ENCODE measurements at regions of chr22 and their contacts with region 1.

Region 1: DNA sequence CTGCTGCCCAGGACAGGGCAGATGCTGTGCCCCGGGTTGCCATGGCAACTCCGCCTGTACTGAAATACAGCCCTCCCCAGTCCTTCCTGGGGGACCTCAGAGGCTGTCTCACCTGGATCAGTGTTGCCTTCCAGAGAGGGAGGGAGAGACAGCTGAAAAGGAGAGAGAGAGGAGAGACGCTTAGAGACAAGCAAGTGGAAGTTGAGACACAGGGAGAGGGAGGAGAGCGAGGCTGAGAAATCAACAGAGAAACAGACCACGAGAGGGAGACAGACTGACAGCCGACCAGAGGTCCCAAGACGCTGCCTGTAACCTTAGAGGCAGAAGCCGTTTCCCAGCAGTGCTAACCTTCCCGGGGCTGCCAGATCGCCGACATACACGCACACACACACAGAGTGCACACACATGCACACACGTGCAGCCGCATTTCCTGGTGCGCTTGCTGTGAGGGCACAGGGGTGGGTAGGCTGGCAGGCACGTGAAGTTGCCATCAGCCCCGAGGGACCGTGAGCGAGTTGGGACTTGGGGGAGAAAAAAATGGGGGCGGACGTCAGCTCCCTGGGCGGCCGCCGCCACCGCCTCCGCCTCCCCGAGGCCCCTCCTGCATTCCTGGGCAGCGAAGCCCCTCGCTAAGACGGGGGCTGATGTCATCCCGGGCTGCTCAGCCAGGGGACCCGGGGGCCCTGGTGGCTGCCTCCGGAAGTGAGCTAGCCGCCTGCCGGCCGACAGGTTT is 88.6 kb upstream of the CRYBB3 start:
- DNase-seq: peak; percentile 73 to 85
- H3K4me3 ChIP-seq: peak overlapping the region; percentile 78
- H3K27ac ChIP-seq: peak overlapping the region; percentile 9; the same call in 1 of the 2 replicates
- H3K4me1 ChIP-seq: peaks cover 5% of the 10 kb centered on the region
- H3K27me3 ChIP-seq: no peaks in the 10 kb centered on the region
- CTCF ChIP-seq: peak; percentile 74

Region 2: DNA sequence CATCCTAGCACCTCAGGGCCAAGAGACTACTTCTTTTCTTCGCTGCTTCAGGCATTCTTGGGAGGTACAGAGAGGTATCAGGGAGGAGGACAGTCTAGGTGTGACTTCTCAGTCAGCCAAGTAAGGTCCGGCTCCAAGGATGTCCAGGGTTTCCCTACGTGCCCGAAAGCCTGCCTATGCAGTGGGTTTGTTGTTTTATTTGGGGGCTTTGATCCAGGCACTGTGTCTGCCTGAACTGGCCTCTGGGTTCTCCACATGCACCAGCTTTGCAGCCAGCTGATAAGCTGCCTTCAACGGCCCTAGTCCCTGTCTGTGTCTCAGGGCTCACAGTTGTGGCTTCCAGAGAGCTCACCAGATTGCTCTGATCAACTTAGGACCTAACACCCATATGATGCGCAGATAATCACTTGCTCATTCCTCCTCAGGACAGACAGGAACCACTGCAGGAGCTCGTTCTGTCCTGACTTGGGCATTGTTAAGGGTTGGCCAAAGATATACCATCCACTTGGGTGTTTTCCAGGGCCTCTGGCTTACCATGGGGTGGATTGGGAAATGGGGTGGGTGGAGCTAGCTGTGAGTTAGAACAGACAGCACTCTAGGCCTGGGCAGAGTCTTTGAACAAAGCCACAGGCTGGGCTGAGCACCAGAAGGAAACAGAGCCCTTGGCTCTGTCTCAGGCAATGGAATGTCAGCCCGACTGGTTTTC is 43.1 kb after region 1 on chr22:
- CTCF ChIA-PET with region 1: interaction called, 3 read pairs
- POLR2A ChIA-PET with region 1: interaction called, 3 read pairs
- intact Hi-C with region 1: loop called (anchors 5 kb)
- DNase-seq: peak; percentile 83 to 90
- H3K4me3 ChIP-seq: no peak overlapping the region
- H3K27ac ChIP-seq: peak overlapping the region; percentile 31
- H3K4me1 ChIP-seq: peaks cover 25% of the 10 kb centered on the region
- H3K27me3 ChIP-seq: no peaks in the 10 kb centered on the region
- CTCF ChIP-seq: no peak

Region 3: GRCh38 chr22:25172153-25172552 is 61.1 kb after region 1 on chr22:
- CTCF ChIA-PET with region 1: interaction called, 3 read pairs
- POLR2A ChIA-PET with region 1: no interaction called
- intact Hi-C with region 1: loop called (anchors 1 kb)
- DNase-seq: peak in 1 of 2 experiments; percentile 12
- H3K4me3 ChIP-seq: no peak overlapping the region
- H3K27ac ChIP-seq: no peak overlapping the region
- H3K4me1 ChIP-seq: peaks cover 25% of the 10 kb centered on the region
- H3K27me3 ChIP-seq: no peaks in the 10 kb centered on the region
- CTCF ChIP-seq: peak; percentile 73

Measured in PC-9 (cell line).